ENCODE measurements at regions of chr16 and their contacts with region 1.

Region 1: GRCh38 chr16:527006-527753 is at the start of gene CAPN15:
- DNase-seq: peak; percentile 71 to 94 (median 81)
- ATAC-seq: peak; percentile 87
- H3K4me3 ChIP-seq: peak within 1 kb of the TSS; percentile 83
- H3K4me3 Mint-ChIP-seq: peak within 1 kb of the TSS; percentile 90
- H3K27ac ChIP-seq: peak within 1 kb of the TSS; percentile 73 to 84
- H3K27ac Mint-ChIP-seq: peak within 1 kb of the TSS; percentile 80
- H3K4me1 ChIP-seq: peaks cover 50% of the 10 kb centered on the region
- H3K4me1 Mint-ChIP-seq: peaks cover 25% of the 10 kb centered on the region
- H3K27me3 ChIP-seq: no peaks in the 10 kb centered on the region
- H3K27me3 Mint-ChIP-seq: no peaks in the 10 kb centered on the region
- CTCF ChIP-seq: no peak
- total RNA-seq, gene CAPN15: 35.5 to 36.9 TPM

Region 2: DNA sequence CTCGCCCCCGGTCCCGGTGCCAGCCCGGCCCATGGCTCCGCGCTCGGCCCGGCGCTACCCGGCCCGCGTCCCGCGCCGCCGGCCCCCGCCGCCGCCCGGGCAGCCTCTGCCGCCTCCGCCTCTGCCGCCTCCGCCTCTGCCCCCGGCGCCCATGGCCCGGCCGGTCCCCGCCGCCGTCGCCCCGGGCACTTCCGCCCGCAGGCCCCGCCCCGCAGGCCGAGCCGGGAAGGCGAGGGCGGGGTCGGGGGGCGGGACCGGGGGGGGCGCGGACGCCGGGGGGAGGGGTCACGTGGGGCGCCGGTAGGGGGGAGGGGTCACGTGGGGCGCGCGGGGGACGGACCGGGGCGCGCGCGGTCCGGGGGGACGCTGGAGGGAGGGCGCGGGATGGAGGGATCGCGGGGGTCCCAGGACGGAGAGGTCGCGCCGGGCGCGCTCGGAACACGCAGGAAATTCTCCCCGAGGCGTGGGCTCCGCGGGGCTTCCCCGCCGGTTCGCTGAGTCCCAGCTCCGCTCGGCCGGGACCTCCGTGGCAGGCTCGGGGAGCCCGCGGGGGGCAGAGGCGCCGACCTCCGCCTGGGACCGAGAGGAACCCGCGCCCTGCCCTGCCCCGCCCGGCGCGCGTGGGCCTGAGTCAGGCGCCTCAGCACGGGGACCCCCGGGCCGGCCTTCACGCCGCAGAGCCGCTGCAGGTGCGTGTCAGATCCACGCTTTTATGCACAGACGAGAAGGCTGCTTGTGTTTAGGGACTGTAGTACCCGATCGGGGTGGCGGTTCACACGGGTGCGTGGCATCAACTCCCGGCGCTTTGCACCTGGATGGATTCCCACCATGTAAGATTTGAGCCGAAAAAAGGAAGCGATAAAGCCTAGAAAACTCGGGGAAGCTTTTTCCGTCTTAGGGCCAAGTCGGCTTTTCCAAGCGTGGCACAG is 145.1 kb before region 1 on chr16 and contains the start of gene PGAP6:
- CTCF ChIA-PET with region 1: no interaction called
- POLR2A ChIA-PET with region 1: no interaction called
- intact Hi-C with region 1: loop called in 1 of 2 experiments (anchors 5 kb)
- DNase-seq: peak in 12 of 14 experiments; percentile 35 to 87 (median 71)
- ATAC-seq: peak; percentile 42
- H3K4me3 ChIP-seq: peak within 1 kb of the TSS; percentile 73
- H3K4me3 Mint-ChIP-seq: peak within 1 kb of the TSS; percentile 84
- H3K27ac ChIP-seq: peak within 1 kb of the TSS in 1 of 2 donors; percentile 64
- H3K27ac Mint-ChIP-seq: peak within 1 kb of the TSS; percentile 98
- H3K4me1 ChIP-seq: peaks cover 53% of the 10 kb centered on the region
- H3K4me1 Mint-ChIP-seq: peaks cover 26% of the 10 kb centered on the region
- H3K27me3 ChIP-seq: no peaks in the 10 kb centered on the region
- H3K27me3 Mint-ChIP-seq: no peaks in the 10 kb centered on the region
- CTCF ChIP-seq: no peak
- total RNA-seq, gene PGAP6: 59.7 to 63.7 TPM

Region 3: GRCh38 chr16:466651-467050 is 60.5 kb before region 1 on chr16:
- CTCF ChIA-PET with region 1: no interaction called
- POLR2A ChIA-PET with region 1: no interaction called
- intact Hi-C with region 1: no loop called
- DNase-seq: no peak
- ATAC-seq: no peak
- H3K4me3 ChIP-seq: no peak overlapping the region
- H3K4me3 Mint-ChIP-seq: no peak overlapping the region
- H3K27ac ChIP-seq: no peak overlapping the region
- H3K27ac Mint-ChIP-seq: no peak overlapping the region
- H3K4me1 ChIP-seq: no peaks in the 10 kb centered on the region
- H3K4me1 Mint-ChIP-seq: no peaks in the 10 kb centered on the region
- H3K27me3 ChIP-seq: no peaks in the 10 kb centered on the region
- H3K27me3 Mint-ChIP-seq: no peaks in the 10 kb centered on the region
- CTCF ChIP-seq: no peak

Region 4: GRCh38 chr16:569445-570254 is 42.5 kb after region 1 on chr16 and contains the start of gene PIGQ:
- CTCF ChIA-PET with region 1: no interaction called
- POLR2A ChIA-PET with region 1: interaction called, 6 read pairs
- intact Hi-C with region 1: loop called in 1 of 2 experiments (anchors 1 kb)
- DNase-seq: peak; percentile 37 to 84 (median 58)
- ATAC-seq: peak; percentile 77
- H3K4me3 ChIP-seq: peak within 1 kb of the TSS; percentile 65
- H3K4me3 Mint-ChIP-seq: peak within 1 kb of the TSS; percentile 92
- H3K27ac ChIP-seq: peak within 1 kb of the TSS; percentile 64 to 70
- H3K27ac Mint-ChIP-seq: peak within 1 kb of the TSS; percentile 85
- H3K4me1 ChIP-seq: peaks cover 55% of the 10 kb centered on the region
- H3K4me1 Mint-ChIP-seq: peaks cover 33% of the 10 kb centered on the region
- H3K27me3 ChIP-seq: no peaks in the 10 kb centered on the region
- H3K27me3 Mint-ChIP-seq: no peaks in the 10 kb centered on the region
- CTCF ChIP-seq: no peak
- total RNA-seq, gene PIGQ: 22.8 to 27.0 TPM

Region 5: GRCh38 chr16:610513-611334 is 83.5 kb after region 1 on chr16:
- CTCF ChIA-PET with region 1: no interaction called
- POLR2A ChIA-PET with region 1: no interaction called
- intact Hi-C with region 1: loop called in 1 of 2 experiments (anchors 5 kb)
- DNase-seq: peak; percentile 35 to 77 (median 48)
- ATAC-seq: peak; percentile 78
- H3K4me3 ChIP-seq: no peak overlapping the region
- H3K4me3 Mint-ChIP-seq: no peak overlapping the region
- H3K27ac ChIP-seq: no peak overlapping the region
- H3K27ac Mint-ChIP-seq: no peak overlapping the region
- H3K4me1 ChIP-seq: peaks cover 9% of the 10 kb centered on the region
- H3K4me1 Mint-ChIP-seq: peaks cover 5% of the 10 kb centered on the region
- H3K27me3 ChIP-seq: no peaks in the 10 kb centered on the region
- H3K27me3 Mint-ChIP-seq: no peaks in the 10 kb centered on the region
- CTCF ChIP-seq: peak; percentile 73